ENCODE measurements at regions of chr5 and their contacts with region 1.

Region 1: GRCh38 chr5:62692946-62693713 is 114.5 kb downstream of the LRRC70 start:
- DNase-seq: no peak
- ATAC-seq: peak; percentile 43; the same call in 2 of the 3 replicates
- H3K4me3 ChIP-seq: no peak overlapping the region
- H3K27ac ChIP-seq: no peak overlapping the region
- H3K4me1 ChIP-seq: peaks cover 4% of the 10 kb centered on the region; the same call in 1 of the 2 replicates
- H3K27me3 ChIP-seq: no peaks in the 10 kb centered on the region
- CTCF ChIP-seq: no peak
- EP300 ChIP-seq: no peak
- POLR2A ChIP-seq: no peak
- RAD21 ChIP-seq: no peak

Region 2: DNA sequence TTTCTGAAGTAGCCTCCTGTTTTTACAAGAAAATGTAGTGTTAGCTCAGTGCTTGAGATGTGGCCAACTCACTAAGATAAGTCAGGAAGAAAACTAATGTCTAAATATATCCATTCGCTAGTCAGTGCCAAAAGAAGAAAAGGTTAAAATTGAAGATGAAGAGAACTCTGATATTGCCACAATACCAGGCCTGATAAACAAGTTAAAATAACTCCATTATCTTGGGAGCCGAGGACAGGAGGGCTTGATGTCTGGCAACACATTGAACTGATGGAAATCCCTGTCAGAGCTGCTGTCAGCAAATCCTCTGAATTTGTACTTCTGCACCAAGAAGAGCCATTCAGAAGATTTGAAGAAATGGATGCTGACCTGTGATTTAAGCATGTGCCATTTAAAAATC is 11.1 kb before region 1 on chr5:
- CTCF ChIA-PET with region 1: interaction called, 10 read pairs
- POLR2A ChIA-PET with region 1: no interaction called
- RAD21 ChIA-PET with region 1: no interaction called
- SMC1A ChIA-PET with region 1: interaction called, 11 read pairs
- in situ Hi-C with region 1: no loop called
- intact Hi-C with region 1: no loop called
- DNase-seq: no peak
- ATAC-seq: no peak
- H3K4me3 ChIP-seq: no peak overlapping the region
- H3K27ac ChIP-seq: no peak overlapping the region
- H3K4me1 ChIP-seq: no peaks in the 10 kb centered on the region
- H3K27me3 ChIP-seq: no peaks in the 10 kb centered on the region
- CTCF ChIP-seq: no peak
- EP300 ChIP-seq: no peak
- POLR2A ChIP-seq: no peak
- RAD21 ChIP-seq: no peak

Region 3: DNA sequence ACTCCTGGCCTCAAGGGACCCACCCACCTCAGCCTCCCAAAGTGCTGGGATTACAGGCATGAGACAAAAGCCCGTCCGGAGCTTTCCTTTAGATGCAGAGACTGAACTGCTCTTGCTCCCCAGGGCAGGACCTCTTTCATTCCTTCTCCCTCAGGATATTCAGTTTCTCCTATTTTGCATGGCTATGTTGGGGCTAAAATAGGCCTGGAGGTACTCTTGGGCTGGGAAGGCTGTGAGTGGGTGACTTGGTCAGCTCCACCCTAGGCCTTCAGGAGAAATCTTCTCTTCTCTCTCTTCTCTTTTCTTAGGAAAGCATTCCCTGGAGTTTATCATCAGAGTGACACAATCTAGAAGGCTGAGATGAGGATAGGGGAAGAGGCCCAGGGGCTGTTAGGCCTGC is 11.9 kb after region 1 on chr5:
- CTCF ChIA-PET with region 1: no interaction called
- POLR2A ChIA-PET with region 1: no interaction called
- RAD21 ChIA-PET with region 1: interaction called, 4 read pairs
- SMC1A ChIA-PET with region 1: interaction called, 17 read pairs
- in situ Hi-C with region 1: no loop called
- intact Hi-C with region 1: no loop called
- DNase-seq: no peak
- ATAC-seq: no peak
- H3K4me3 ChIP-seq: no peak overlapping the region
- H3K27ac ChIP-seq: no peak overlapping the region
- H3K4me1 ChIP-seq: no peaks in the 10 kb centered on the region
- H3K27me3 ChIP-seq: no peaks in the 10 kb centered on the region
- CTCF ChIP-seq: no peak
- EP300 ChIP-seq: no peak
- POLR2A ChIP-seq: no peak
- RAD21 ChIP-seq: no peak

Region 4: GRCh38 chr5:63629951-63630630 is 937.0 kb after region 1 on chr5:
- CTCF ChIA-PET with region 1: no interaction called
- POLR2A ChIA-PET with region 1: no interaction called
- RAD21 ChIA-PET with region 1: no interaction called
- SMC1A ChIA-PET with region 1: no interaction called
- in situ Hi-C with region 1: no loop called
- intact Hi-C with region 1: no loop called
- DNase-seq: no peak
- ATAC-seq: no peak
- H3K4me3 ChIP-seq: no peak overlapping the region
- H3K27ac ChIP-seq: no peak overlapping the region
- H3K4me1 ChIP-seq: no peaks in the 10 kb centered on the region
- H3K27me3 ChIP-seq: no peaks in the 10 kb centered on the region
- CTCF ChIP-seq: no peak
- EP300 ChIP-seq: no peak
- POLR2A ChIP-seq: no peak
- RAD21 ChIP-seq: no peak